ENCODE measurements at regions of chr1 and their contacts with region 1.

Region 1: DNA sequence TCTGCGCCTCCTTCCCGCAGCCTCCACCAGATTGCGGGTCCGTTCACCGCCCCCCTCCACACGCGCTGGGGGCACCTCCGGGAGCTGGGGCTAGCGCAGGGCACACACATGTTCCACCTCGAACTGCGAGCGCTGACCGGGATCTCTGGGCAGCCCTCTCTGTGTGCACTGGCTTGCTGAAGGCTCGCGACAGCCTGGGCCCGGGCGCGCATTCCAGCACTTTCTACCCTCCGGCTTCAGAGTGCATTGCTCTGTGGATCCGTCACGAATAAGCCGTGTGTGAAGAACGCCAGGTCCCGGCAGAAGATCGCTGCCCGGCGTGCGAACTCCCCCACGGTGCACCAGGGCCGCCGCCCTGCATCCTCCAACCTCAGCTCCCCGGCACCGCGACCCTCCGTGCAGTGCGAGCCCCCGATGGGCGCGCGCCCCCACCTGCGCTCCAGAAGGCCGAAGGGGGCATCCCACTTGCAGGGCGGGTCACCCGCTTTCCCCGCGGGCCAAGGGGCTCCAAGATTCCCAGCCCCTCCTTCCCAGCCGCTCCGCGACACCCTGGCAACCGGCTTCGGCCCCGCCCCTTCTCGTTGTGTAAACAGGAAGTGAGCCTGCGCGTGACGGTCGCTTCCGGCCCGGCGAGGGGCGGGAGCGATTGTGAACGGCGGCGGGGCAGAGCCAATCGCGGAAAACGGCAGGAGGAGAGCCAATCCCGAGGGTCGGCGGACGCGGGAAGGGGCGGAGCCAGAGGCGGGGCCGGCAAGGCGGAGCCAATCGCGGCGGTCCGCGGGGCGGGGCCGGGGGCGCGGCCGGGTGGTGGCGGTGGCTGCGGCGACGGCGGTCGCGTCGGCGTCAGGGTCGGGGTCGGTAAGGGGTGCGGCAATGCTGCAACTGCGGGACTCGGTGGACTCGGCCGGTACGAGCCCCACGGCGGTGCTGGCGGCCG is at the start of gene TPRG1L:
- DNase-seq: peak; percentile 95 to 98 (median 98)
- H3K4me3 ChIP-seq: peak within 1 kb of the TSS; percentile 56 to 93 (median 88)
- H3K27ac ChIP-seq: peak within 1 kb of the TSS in 1 of 2 experiments; percentile 58
- H3K4me1 ChIP-seq: peaks cover 3 to 25% (median 23%) of the 10 kb centered on the region in 4 experiments
- H3K27me3 ChIP-seq: no peaks in the 10 kb centered on the region

Region 2: DNA sequence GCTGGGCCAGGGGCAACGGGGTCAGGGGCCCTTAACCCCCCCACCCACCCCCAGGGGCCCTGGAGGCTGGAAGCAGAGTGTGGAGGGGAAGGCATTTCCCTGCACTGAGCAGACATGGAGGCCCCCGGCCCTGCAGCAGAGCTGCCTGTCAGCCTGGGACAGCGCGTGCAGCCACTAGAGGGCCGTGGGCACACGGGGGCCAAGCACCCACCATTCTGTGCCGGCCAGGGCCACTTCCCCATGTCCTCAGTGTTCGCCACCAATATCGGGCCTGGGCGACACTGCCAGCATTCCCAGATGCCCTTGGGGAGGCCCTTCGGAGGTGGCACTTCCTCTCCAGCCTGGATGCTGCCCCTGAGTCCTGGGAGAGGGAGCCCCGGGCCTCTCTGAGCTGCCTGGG is 193.2 kb before region 1 on chr1:
- CTCF ChIA-PET with region 1: no interaction called
- POLR2A ChIA-PET with region 1: no interaction called
- DNase-seq: no peak
- H3K4me3 ChIP-seq: no peak overlapping the region
- H3K27ac ChIP-seq: no peak overlapping the region
- H3K4me1 ChIP-seq: no peaks in the 10 kb centered on the region
- H3K27me3 ChIP-seq: no peaks in the 10 kb centered on the region

Region 3: DNA sequence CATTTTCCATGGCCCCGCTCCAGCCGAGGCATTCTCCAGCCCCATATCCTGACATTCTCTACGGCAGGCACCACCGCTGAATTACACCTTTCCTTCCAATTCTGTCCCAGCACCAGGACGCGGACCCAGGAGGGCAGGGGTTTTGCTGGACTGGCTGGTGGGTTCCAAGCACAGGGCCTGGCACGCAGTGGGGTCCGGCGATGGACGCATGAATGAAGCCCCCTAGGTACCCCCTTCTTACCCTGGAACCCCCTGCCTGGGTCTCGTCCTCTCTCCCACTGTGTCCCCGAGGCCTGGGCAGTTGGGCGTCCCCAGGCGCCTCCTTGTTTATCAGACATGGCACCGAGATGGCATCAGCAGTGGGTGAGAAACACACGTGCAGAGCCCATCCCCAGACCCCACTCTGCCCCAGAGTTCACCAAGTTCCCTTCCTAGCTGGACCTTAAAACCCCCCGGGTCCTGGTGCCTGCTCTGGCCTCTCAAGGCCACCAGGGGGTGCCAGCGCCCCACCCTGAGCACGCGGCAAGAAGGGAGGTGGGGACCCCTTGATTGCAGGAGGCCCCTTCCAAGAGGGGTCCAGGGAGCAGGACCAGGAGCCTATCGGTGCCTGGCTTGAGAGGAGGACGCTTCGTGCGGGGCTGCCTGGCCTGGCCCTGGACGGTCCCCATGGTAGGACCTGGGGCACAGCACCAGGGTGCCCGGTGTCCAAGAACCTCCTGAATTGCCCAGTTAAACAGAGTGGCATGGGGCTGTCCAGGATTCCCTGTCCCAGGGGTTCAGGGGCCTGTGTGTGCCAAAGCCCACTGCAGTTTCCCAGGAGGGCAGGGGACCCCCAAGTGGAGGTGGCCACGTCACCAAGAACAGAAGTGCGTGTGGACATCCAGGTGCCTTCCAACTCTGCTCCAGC is 59.3 kb before region 1 on chr1:
- CTCF ChIA-PET with region 1: interaction called, 63 read pairs
- POLR2A ChIA-PET with region 1: interaction called, 4 read pairs
- DNase-seq: peak; percentile 40 to 63 (median 57)
- H3K4me3 ChIP-seq: no peak overlapping the region
- H3K27ac ChIP-seq: no peak overlapping the region
- H3K4me1 ChIP-seq: no peaks in the 10 kb centered on the region
- H3K27me3 ChIP-seq: no peaks in the 10 kb centered on the region

Measured in common myeloid progenitor, CD34-positive (primary cell).